Naive thymus-derived CD4-positive, alpha-beta T cell (primary cell): ENCODE measurements at regions of chr7 and their contacts with region 1.

Region 1: DNA sequence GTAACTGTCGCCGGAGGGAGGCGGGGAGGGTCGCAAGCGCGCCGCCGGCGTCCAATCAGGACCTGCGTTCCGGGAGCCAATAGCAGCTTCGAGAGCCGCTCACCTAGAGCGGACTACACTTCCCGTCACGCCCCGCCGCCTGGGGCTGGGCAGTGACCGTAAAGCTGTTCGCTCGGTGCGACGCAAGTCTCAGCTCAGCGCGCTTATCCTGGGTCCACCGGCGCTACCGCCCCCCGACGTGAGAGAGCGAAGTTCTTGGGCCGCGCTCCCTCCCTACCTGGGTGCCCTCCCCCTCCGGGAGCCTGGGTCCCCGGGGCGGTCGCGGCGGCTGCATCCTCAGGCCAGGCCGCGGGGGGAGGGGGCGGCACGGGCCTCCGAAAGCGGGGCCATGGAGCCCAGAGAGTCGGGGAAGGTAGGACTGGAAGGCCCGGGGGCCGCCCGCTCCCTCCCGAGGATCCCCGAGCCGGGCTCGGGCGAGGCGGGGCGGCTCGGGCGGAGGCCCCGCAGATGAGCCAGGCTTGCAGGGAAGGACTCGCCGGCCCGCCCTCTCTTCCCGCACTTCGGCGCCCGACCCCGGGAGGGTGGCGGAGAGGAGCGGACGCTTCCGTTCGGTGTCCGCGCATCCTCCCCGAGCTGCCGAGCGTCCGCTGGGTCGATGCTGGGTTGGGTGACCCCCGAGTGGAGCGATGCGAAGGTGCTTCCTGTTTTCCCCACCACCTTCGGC is at the start of gene ZNF862:
- DNase-seq: peak; percentile 84 to 96 (median 94)
- ATAC-seq: peak; percentile 99
- H3K4me3 ChIP-seq: peak within 1 kb of the TSS; percentile 67
- H3K4me3 Mint-ChIP-seq: peak within 1 kb of the TSS; percentile 85 to 97 (median 91)
- H3K27ac ChIP-seq: peak within 1 kb of the TSS; percentile 79
- H3K27ac Mint-ChIP-seq: peak within 1 kb of the TSS; percentile 77 to 96 (median 88)
- H3K4me1 ChIP-seq: peaks cover 12 to 22% of the 10 kb centered on the region in 2 donors
- H3K4me1 Mint-ChIP-seq: peaks cover 25 to 52% (median 48%) of the 10 kb centered on the region in 7 donors
- H3K27me3 ChIP-seq: no peaks in the 10 kb centered on the region
- H3K27me3 Mint-ChIP-seq: peaks cover 0 to 15% (median 3%) of the 10 kb centered on the region in 5 donors
- total RNA-seq, gene ZNF862: 36.9 to 112 (median 41.8) TPM

Region 2: DNA sequence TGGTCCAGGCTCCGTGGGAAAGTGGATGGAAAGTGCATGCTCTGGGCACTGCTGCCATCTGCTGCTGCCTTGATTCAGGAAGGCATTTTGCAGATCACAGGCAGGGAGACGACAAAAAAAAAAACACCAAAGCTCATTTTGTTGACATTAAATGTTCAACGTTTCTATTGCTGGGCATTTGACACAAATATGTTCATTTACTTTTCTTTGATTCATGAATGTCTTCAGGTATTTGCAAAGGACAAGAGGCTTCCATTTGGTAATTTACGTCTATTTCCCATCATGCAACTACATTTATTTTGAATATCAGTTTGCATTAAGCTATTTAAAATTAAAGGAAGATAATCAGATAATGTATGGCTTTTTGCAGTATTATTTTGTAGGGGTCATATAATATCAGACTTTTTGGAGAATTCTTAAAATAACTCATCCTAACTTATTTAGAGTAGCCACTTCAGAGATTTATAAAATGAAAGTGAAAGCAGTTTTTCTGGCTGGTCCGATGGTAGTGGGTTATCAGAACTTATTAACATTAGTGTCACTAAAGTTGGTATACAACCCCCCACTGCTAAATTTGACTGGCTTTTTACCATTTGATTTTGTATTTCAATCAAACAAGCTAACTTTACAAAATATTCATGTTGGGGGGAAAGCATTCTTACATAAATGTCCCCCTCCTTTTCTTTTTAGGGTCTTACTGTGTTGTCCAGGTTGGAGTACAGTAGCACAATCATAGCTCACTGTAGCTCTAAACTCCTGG is 875.4 kb before region 1 on chr7:
- CTCF ChIA-PET with region 1: no interaction called
- POLR2A ChIA-PET with region 1: no interaction called
- intact Hi-C with region 1: no loop called
- DNase-seq: peak in 8 of 9 donors; percentile 45 to 80 (median 72)
- ATAC-seq: peak; percentile 61
- H3K4me3 ChIP-seq: peak overlapping the region; percentile 72
- H3K4me3 Mint-ChIP-seq: peak overlapping the region; percentile 78 to 98 (median 93)
- H3K27ac ChIP-seq: peak overlapping the region; percentile 66
- H3K27ac Mint-ChIP-seq: peak overlapping the region; percentile 86 to 95 (median 93)
- H3K4me1 ChIP-seq: peaks cover 0 to 7% of the 10 kb centered on the region in 2 donors
- H3K4me1 Mint-ChIP-seq: peaks cover 11 to 33% (median 25%) of the 10 kb centered on the region in 7 donors
- H3K27me3 ChIP-seq: no peaks in the 10 kb centered on the region
- H3K27me3 Mint-ChIP-seq: peaks cover 0 to 3% (median 0%) of the 10 kb centered on the region in 5 donors

Region 3: GRCh38 chr7:149714050-149714909 is 124.1 kb before region 1 on chr7:
- CTCF ChIA-PET with region 1: no interaction called
- POLR2A ChIA-PET with region 1: no interaction called
- intact Hi-C with region 1: loop called (anchors 1 kb)
- DNase-seq: peak; percentile 68 to 89 (median 84)
- ATAC-seq: peak; percentile 99
- H3K4me3 ChIP-seq: peak overlapping the region; percentile 75
- H3K4me3 Mint-ChIP-seq: peak overlapping the region; percentile 71 to 87 (median 80)
- H3K27ac ChIP-seq: peak overlapping the region; percentile 72
- H3K27ac Mint-ChIP-seq: peak overlapping the region in 4 of 9 donors; percentile 5 to 72 (median 54)
- H3K4me1 ChIP-seq: peaks cover 10 to 13% of the 10 kb centered on the region in 2 donors
- H3K4me1 Mint-ChIP-seq: peaks cover 12 to 26% (median 19%) of the 10 kb centered on the region in 7 donors
- H3K27me3 ChIP-seq: no peaks in the 10 kb centered on the region
- H3K27me3 Mint-ChIP-seq: peaks cover 0 to 4% (median 0%) of the 10 kb centered on the region in 5 donors

Region 4: DNA sequence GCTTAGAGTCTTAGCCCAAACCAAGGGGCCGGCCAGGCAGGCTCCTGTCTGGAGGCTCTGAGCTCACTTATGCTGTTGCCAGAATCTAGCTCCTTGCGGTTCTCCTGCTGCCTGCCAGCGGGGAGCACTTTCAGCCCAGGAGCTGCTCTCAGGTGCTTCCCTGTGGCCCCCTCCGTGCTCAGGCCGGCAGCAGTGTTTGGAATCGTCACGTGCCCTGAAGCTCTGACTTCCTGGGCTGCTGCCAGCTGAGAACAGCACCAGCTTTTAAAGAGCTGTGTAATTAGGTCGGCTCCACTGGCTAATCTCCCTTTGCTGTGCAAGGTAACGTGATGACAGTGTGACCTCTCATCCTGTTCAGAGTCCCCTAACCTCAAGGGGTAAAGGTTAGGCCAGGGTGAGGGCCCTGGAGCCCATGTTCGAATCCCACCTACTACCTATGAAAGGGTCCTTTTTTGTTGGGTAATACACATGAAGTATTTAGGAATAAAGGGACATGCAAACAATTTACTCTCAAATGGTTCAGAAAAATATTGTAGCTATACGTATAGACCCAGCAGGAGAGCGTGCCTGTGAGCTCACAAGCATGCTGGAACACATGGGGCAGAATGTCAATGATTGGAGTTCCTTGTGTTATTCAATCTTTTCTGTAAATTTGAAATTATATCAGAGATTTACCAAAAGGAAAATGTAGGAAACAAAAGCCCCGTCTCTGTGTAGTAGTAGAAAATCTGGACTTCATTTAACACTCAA is 16.4 kb after region 1 on chr7:
- CTCF ChIA-PET with region 1: interaction called, 10 read pairs
- POLR2A ChIA-PET with region 1: interaction called, 18 read pairs
- intact Hi-C with region 1: loop called (anchors 1 to 2 kb)
- DNase-seq: peak in 4 of 9 donors; percentile 42 to 57 (median 48)
- ATAC-seq: peak; percentile 66
- H3K4me3 ChIP-seq: no peak overlapping the region
- H3K4me3 Mint-ChIP-seq: peak overlapping the region in 9 of 10 donors; percentile 33 to 83 (median 70)
- H3K27ac ChIP-seq: peak overlapping the region; percentile 52
- H3K27ac Mint-ChIP-seq: peak overlapping the region in 8 of 9 donors; percentile 66 to 92 (median 84)
- H3K4me1 ChIP-seq: peaks cover 3 to 52% of the 10 kb centered on the region in 2 donors
- H3K4me1 Mint-ChIP-seq: peaks cover 43 to 84% (median 71%) of the 10 kb centered on the region in 7 donors
- H3K27me3 ChIP-seq: no peaks in the 10 kb centered on the region
- H3K27me3 Mint-ChIP-seq: no peaks in the 10 kb centered on the region

Region 5: GRCh38 chr7:149883452-149883861 is 45.1 kb after region 1 on chr7:
- CTCF ChIA-PET with region 1: interaction called, 10 read pairs
- POLR2A ChIA-PET with region 1: interaction called, 4 read pairs
- intact Hi-C with region 1: no loop called
- DNase-seq: peak in 4 of 9 donors; percentile 58 to 63 (median 60)
- ATAC-seq: peak; percentile 81
- H3K4me3 ChIP-seq: no peak overlapping the region
- H3K4me3 Mint-ChIP-seq: peak overlapping the region in 1 of 10 donors; percentile 38
- H3K27ac ChIP-seq: no peak overlapping the region
- H3K27ac Mint-ChIP-seq: peak overlapping the region in 6 of 9 donors; percentile 11 to 80 (median 62)
- H3K4me1 ChIP-seq: peaks cover 0 to 7% of the 10 kb centered on the region in 2 donors
- H3K4me1 Mint-ChIP-seq: peaks cover 5 to 26% (median 19%) of the 10 kb centered on the region in 7 donors
- H3K27me3 ChIP-seq: no peaks in the 10 kb centered on the region
- H3K27me3 Mint-ChIP-seq: no peaks in the 10 kb centered on the region